CD4-positive, alpha-beta T cell (primary cell): ENCODE measurements at regions of chr6 and their contacts with region 1.

Region 1: GRCh38 chr6:26175428-26176181 is 88.4 kb downstream of the HFE start:
- DNase-seq: peak in 11 of 14 experiments; percentile 13 to 85 (median 54)
- ATAC-seq: no peak
- H3K4me3 ChIP-seq: no peak overlapping the region
- H3K4me3 Mint-ChIP-seq: peak overlapping the region; percentile 83
- H3K27ac ChIP-seq: peak overlapping the region in 1 of 2 donors; percentile 41
- H3K27ac Mint-ChIP-seq: peak overlapping the region; percentile 93
- H3K4me1 ChIP-seq: peaks cover 17% of the 10 kb centered on the region
- H3K4me1 Mint-ChIP-seq: peaks cover 53% of the 10 kb centered on the region
- H3K27me3 ChIP-seq: no peaks in the 10 kb centered on the region
- H3K27me3 Mint-ChIP-seq: no peaks in the 10 kb centered on the region
- CTCF ChIP-seq: peak; percentile 87

Region 2: GRCh38 chr6:25821341-25821740 is 354.3 kb before region 1 on chr6:
- CTCF ChIA-PET with region 1: no interaction called
- POLR2A ChIA-PET with region 1: no interaction called
- intact Hi-C with region 1: no loop called
- DNase-seq: no peak
- ATAC-seq: no peak
- H3K4me3 ChIP-seq: no peak overlapping the region
- H3K4me3 Mint-ChIP-seq: no peak overlapping the region
- H3K27ac ChIP-seq: no peak overlapping the region
- H3K27ac Mint-ChIP-seq: no peak overlapping the region
- H3K4me1 ChIP-seq: no peaks in the 10 kb centered on the region
- H3K4me1 Mint-ChIP-seq: no peaks in the 10 kb centered on the region
- H3K27me3 ChIP-seq: no peaks in the 10 kb centered on the region
- H3K27me3 Mint-ChIP-seq: peaks cover 22% of the 10 kb centered on the region
- CTCF ChIP-seq: no peak

Region 3: GRCh38 chr6:26204332-26205165 is 28.9 kb after region 1 on chr6:
- CTCF ChIA-PET with region 1: interaction called, 3 read pairs
- POLR2A ChIA-PET with region 1: interaction called, 418 read pairs
- intact Hi-C with region 1: loop called in 1 of 2 experiments (anchors 2 kb)
- DNase-seq: peak; percentile 73 to 98 (median 80)
- ATAC-seq: peak; percentile 69
- H3K4me3 ChIP-seq: peak overlapping the region; percentile 68
- H3K4me3 Mint-ChIP-seq: no peak overlapping the region
- H3K27ac ChIP-seq: peak overlapping the region; percentile 89 to 90
- H3K27ac Mint-ChIP-seq: no peak overlapping the region
- H3K4me1 ChIP-seq: peaks cover 34% of the 10 kb centered on the region
- H3K4me1 Mint-ChIP-seq: peaks cover 8% of the 10 kb centered on the region
- H3K27me3 ChIP-seq: no peaks in the 10 kb centered on the region
- H3K27me3 Mint-ChIP-seq: no peaks in the 10 kb centered on the region
- CTCF ChIP-seq: peak; percentile 32

Region 4: GRCh38 chr6:26322645-26323482 is 147.3 kb after region 1 on chr6:
- CTCF ChIA-PET with region 1: no interaction called
- POLR2A ChIA-PET with region 1: interaction called, 11 read pairs
- intact Hi-C with region 1: loop called in 1 of 2 experiments (anchors 5 kb)
- DNase-seq: peak in 10 of 14 experiments; percentile 20 to 88 (median 52)
- ATAC-seq: peak; percentile 75
- H3K4me3 ChIP-seq: peak overlapping the region; percentile 54
- H3K4me3 Mint-ChIP-seq: peak overlapping the region; percentile 96
- H3K27ac ChIP-seq: no peak overlapping the region
- H3K27ac Mint-ChIP-seq: peak overlapping the region; percentile 93
- H3K4me1 ChIP-seq: peaks cover 23% of the 10 kb centered on the region
- H3K4me1 Mint-ChIP-seq: peaks cover 30% of the 10 kb centered on the region
- H3K27me3 ChIP-seq: no peaks in the 10 kb centered on the region
- H3K27me3 Mint-ChIP-seq: peaks cover 35% of the 10 kb centered on the region
- CTCF ChIP-seq: no peak

Region 5: DNA sequence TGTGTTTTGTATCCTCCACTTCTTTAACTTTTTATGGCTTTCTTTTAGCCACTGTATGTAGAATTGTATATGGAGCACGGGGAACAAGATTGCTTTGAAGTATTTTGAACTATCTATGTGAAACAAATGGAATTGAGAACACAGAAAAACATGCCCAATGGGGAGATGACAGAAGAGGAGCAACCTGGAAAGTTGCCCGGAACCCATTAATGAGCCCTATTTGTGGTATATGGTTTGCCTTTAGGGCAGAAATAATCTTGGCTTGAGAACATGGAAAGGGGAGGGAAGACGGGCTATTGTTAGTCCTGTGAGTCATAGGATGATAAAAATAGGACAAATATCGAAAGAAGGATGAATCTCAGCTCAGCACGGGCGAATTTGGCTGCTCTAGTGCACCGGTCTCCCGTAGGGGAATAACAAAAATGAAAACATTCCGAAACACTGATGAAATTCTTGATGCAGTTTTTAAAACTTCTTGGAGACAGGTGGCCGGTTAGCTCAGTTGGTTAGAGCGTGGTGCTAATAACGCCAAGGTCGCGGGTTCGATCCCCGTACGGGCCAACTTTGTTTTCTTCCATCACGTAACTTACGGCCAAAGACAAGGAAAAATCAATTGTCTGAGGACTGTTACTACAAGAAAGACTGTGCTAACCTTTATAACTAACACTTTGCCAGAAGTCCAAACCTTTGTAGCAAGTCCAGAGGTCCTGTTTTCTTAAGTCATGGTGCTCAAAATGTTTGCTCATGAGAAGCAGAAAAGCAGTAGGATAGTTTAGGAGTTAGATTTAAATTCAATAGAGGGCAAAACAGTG is 378.2 kb after region 1 on chr6:
- CTCF ChIA-PET with region 1: no interaction called
- POLR2A ChIA-PET with region 1: no interaction called
- intact Hi-C with region 1: loop called in 1 of 2 experiments (anchors 5 kb)
- DNase-seq: peak; percentile 51 to 91 (median 64)
- ATAC-seq: peak; percentile 30
- H3K4me3 ChIP-seq: peak overlapping the region; percentile 60
- H3K4me3 Mint-ChIP-seq: no peak overlapping the region
- H3K27ac ChIP-seq: no peak overlapping the region
- H3K27ac Mint-ChIP-seq: no peak overlapping the region
- H3K4me1 ChIP-seq: peaks cover 33% of the 10 kb centered on the region
- H3K4me1 Mint-ChIP-seq: peaks cover 25% of the 10 kb centered on the region
- H3K27me3 ChIP-seq: no peaks in the 10 kb centered on the region
- H3K27me3 Mint-ChIP-seq: peaks cover 8% of the 10 kb centered on the region
- CTCF ChIP-seq: no peak